MCF 10A (cell line): ENCODE measurements at regions of chr2 and their contacts with region 1.

Region 1: GRCh38 chr2:65390134-65390533 is 42.3 kb downstream of the SPRED2 start:
- DNase-seq: no peak
- H3K4me3 Mint-ChIP-seq: no peak overlapping the region
- H3K27ac Mint-ChIP-seq: peak overlapping the region; percentile 70
- H3K4me1 Mint-ChIP-seq: peaks cover 65% of the 10 kb centered on the region
- H3K27me3 Mint-ChIP-seq: no peaks in the 10 kb centered on the region
- CTCF ChIP-seq: no peak

Region 2: GRCh38 chr2:65329525-65329924 is 60.6 kb before region 1 on chr2:
- CTCF ChIA-PET with region 1: no interaction called
- POLR2A ChIA-PET with region 1: no interaction called
- intact Hi-C with region 1: no loop called
- DNase-seq: no peak
- H3K4me3 Mint-ChIP-seq: no peak overlapping the region
- H3K27ac Mint-ChIP-seq: no peak overlapping the region
- H3K4me1 Mint-ChIP-seq: no peaks in the 10 kb centered on the region
- H3K27me3 Mint-ChIP-seq: no peaks in the 10 kb centered on the region
- CTCF ChIP-seq: no peak

Region 3: GRCh38 chr2:65377556-65378192 is 12.5 kb before region 1 on chr2:
- CTCF ChIA-PET with region 1: interaction called, 4 read pairs
- POLR2A ChIA-PET with region 1: interaction called, 10 read pairs
- intact Hi-C with region 1: no loop called
- DNase-seq: peak; percentile 90
- H3K4me3 Mint-ChIP-seq: no peak overlapping the region
- H3K27ac Mint-ChIP-seq: no peak overlapping the region
- H3K4me1 Mint-ChIP-seq: peaks cover 33% of the 10 kb centered on the region
- H3K27me3 Mint-ChIP-seq: no peaks in the 10 kb centered on the region
- CTCF ChIP-seq: no peak